Naive thymus-derived CD4-positive, alpha-beta T cell (primary cell): ENCODE measurements at regions of chr12 and their contacts with region 1.

Region 1: GRCh38 chr12:31790759-31791158 is 61.9 kb upstream of the AMN1 start:
- DNase-seq: peak in 1 of 9 donors; percentile 12
- ATAC-seq: no peak
- H3K4me3 ChIP-seq: no peak overlapping the region
- H3K4me3 Mint-ChIP-seq: peak overlapping the region in 8 of 10 donors; percentile 7 to 75 (median 46)
- H3K27ac ChIP-seq: no peak overlapping the region
- H3K27ac Mint-ChIP-seq: peak overlapping the region; percentile 15 to 87 (median 84)
- H3K4me1 ChIP-seq: peaks cover 13 to 24% of the 10 kb centered on the region in 2 donors
- H3K4me1 Mint-ChIP-seq: peaks cover 12 to 58% (median 44%) of the 10 kb centered on the region in 7 donors
- H3K27me3 ChIP-seq: no peaks in the 10 kb centered on the region
- H3K27me3 Mint-ChIP-seq: no peaks in the 10 kb centered on the region

Region 2: DNA sequence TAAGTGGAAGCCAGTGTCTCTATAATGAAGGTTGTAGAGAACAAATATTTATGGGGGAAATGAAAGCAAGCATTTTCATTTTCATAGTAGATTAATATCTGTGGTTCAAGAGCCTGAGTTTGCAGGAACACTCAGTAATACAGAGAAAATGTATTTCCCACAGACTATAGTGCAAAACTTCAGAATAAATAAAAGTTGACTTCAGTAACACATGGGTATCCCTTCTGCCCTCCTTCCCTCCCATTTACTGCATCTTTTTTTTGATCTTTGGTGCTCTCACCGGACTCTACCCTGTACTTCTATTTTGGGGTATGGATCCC is 13.4 kb after region 1 on chr12:
- CTCF ChIA-PET with region 1: no interaction called
- POLR2A ChIA-PET with region 1: interaction called, 3 read pairs
- intact Hi-C with region 1: loop called in 1 of 2 experiments (anchors 1 kb)
- DNase-seq: no peak
- ATAC-seq: no peak
- H3K4me3 ChIP-seq: peak overlapping the region; percentile 32
- H3K4me3 Mint-ChIP-seq: peak overlapping the region; percentile 33 to 91 (median 82)
- H3K27ac ChIP-seq: no peak overlapping the region
- H3K27ac Mint-ChIP-seq: peak overlapping the region; percentile 58 to 95 (median 88)
- H3K4me1 ChIP-seq: peaks cover 0 to 41% of the 10 kb centered on the region in 2 donors
- H3K4me1 Mint-ChIP-seq: peaks cover 26 to 67% (median 61%) of the 10 kb centered on the region in 7 donors
- H3K27me3 ChIP-seq: no peaks in the 10 kb centered on the region
- H3K27me3 Mint-ChIP-seq: no peaks in the 10 kb centered on the region

Region 3: DNA sequence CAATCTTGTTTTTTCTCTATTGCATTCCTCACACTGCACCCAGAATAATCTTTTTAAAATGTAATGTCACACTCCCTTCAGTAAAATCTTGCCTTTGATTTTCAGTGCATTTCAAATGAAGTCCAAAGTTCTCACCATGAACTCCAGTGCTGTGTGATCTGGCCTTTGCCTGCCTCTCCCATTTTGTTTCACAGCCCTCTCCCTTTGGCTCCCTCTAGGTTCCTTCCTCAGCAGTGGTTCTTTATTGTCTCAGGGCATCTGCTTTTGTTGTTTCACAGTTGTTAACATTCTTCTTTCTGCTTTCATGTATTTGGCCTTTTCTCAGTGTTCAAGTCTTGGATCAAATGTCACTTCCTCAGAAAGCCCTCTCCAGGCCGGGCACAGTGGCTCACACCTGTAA is 22.5 kb after region 1 on chr12:
- CTCF ChIA-PET with region 1: no interaction called
- POLR2A ChIA-PET with region 1: interaction called, 4 read pairs
- intact Hi-C with region 1: loop called in 1 of 2 experiments (anchors 2 kb)
- DNase-seq: no peak
- ATAC-seq: no peak
- H3K4me3 ChIP-seq: no peak overlapping the region
- H3K4me3 Mint-ChIP-seq: peak overlapping the region in 3 of 10 donors; percentile 3 to 22 (median 10)
- H3K27ac ChIP-seq: no peak overlapping the region
- H3K27ac Mint-ChIP-seq: peak overlapping the region in 8 of 9 donors; percentile 6 to 72 (median 32)
- H3K4me1 ChIP-seq: no peaks in the 10 kb centered on the region
- H3K4me1 Mint-ChIP-seq: peaks cover 10 to 42% (median 22%) of the 10 kb centered on the region in 7 donors
- H3K27me3 ChIP-seq: no peaks in the 10 kb centered on the region
- H3K27me3 Mint-ChIP-seq: no peaks in the 10 kb centered on the region

Region 4: GRCh38 chr12:31989571-31990362 is 199.0 kb after region 1 on chr12:
- CTCF ChIA-PET with region 1: no interaction called
- POLR2A ChIA-PET with region 1: no interaction called
- intact Hi-C with region 1: no loop called
- DNase-seq: no peak
- ATAC-seq: no peak
- H3K4me3 ChIP-seq: no peak overlapping the region
- H3K4me3 Mint-ChIP-seq: peak overlapping the region in 1 of 10 donors; percentile 81
- H3K27ac ChIP-seq: no peak overlapping the region
- H3K27ac Mint-ChIP-seq: peak overlapping the region in 8 of 9 donors; percentile 4 to 82 (median 70)
- H3K4me1 ChIP-seq: peaks cover 0 to 5% of the 10 kb centered on the region in 2 donors
- H3K4me1 Mint-ChIP-seq: peaks cover 5 to 55% (median 38%) of the 10 kb centered on the region in 7 donors
- H3K27me3 ChIP-seq: no peaks in the 10 kb centered on the region
- H3K27me3 Mint-ChIP-seq: no peaks in the 10 kb centered on the region